ENCODE measurements at regions of chr10 and their contacts with region 1.

Region 1: GRCh38 chr10:50318129-50318528 is 66.8 kb upstream of the ASAH2 start:
- DNase-seq: no peak
- ATAC-seq: no peak
- H3K4me3 ChIP-seq: no peak overlapping the region
- H3K27ac ChIP-seq: no peak overlapping the region
- H3K4me1 ChIP-seq: no peaks in the 10 kb centered on the region
- H3K27me3 ChIP-seq: no peaks in the 10 kb centered on the region
- CTCF ChIP-seq: no peak

Region 2: DNA sequence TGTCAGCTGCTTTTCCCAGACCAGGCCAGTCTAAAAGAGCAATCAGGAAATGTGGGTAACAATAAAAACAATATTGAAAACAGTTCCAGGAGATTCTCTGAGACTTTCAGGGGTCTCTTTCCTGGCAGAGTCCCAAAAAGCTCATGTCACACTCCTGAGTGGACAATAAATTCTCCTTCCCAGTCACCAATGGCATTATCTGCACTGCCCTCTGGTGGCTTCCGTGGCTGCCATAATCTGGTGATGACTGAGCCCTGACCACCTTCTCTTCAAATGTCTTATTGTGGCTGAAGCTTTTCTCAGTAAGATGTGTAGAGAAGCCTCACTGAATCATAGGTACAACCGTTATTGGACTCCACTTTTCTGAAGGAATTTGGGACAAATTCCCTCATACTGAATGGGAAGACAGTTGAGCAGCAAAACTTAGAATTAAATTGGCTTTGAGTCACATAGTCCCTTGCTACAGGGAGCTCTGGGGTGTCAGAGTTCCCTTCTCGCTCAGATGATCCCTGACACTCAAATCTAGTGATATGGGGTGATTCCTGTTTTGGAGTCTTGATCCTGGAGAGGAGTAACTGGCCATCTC is 42.4 kb before region 1 on chr10:
- CTCF ChIA-PET with region 1: interaction called, 11 read pairs
- POLR2A ChIA-PET with region 1: no interaction called
- in situ Hi-C with region 1: no loop called
- intact Hi-C with region 1: no loop called
- DNase-seq: peak; percentile 13
- ATAC-seq: peak; percentile 87; the same call in 1 of the 2 replicates
- H3K4me3 ChIP-seq: no peak overlapping the region
- H3K27ac ChIP-seq: no peak overlapping the region
- H3K4me1 ChIP-seq: no peaks in the 10 kb centered on the region
- H3K27me3 ChIP-seq: peaks cover 30% of the 10 kb centered on the region
- CTCF ChIP-seq: peak; percentile 84

Measured in Panc1 (cell line).